Calu3 (cell line): ENCODE measurements at regions of chr6 and their contacts with region 1.

Region 1: GRCh38 chr6:137341681-137342195 is 122.6 kb upstream of the IFNGR1 start:
- DNase-seq: peak; percentile 52
- H3K4me3 Mint-ChIP-seq: peak overlapping the region; percentile 28
- H3K27ac Mint-ChIP-seq: no peak overlapping the region
- H3K4me1 Mint-ChIP-seq: no peaks in the 10 kb centered on the region
- H3K27me3 Mint-ChIP-seq: no peaks in the 10 kb centered on the region
- CTCF ChIP-seq: peak; percentile 32

Region 2: GRCh38 chr6:137389150-137389704 is 47.5 kb after region 1 on chr6:
- CTCF ChIA-PET with region 1: no interaction called
- intact Hi-C with region 1: no loop called
- DNase-seq: no peak
- H3K4me3 Mint-ChIP-seq: no peak overlapping the region
- H3K27ac Mint-ChIP-seq: no peak overlapping the region
- H3K4me1 Mint-ChIP-seq: no peaks in the 10 kb centered on the region
- H3K27me3 Mint-ChIP-seq: peaks cover 34% of the 10 kb centered on the region
- CTCF ChIP-seq: no peak

Region 3: DNA sequence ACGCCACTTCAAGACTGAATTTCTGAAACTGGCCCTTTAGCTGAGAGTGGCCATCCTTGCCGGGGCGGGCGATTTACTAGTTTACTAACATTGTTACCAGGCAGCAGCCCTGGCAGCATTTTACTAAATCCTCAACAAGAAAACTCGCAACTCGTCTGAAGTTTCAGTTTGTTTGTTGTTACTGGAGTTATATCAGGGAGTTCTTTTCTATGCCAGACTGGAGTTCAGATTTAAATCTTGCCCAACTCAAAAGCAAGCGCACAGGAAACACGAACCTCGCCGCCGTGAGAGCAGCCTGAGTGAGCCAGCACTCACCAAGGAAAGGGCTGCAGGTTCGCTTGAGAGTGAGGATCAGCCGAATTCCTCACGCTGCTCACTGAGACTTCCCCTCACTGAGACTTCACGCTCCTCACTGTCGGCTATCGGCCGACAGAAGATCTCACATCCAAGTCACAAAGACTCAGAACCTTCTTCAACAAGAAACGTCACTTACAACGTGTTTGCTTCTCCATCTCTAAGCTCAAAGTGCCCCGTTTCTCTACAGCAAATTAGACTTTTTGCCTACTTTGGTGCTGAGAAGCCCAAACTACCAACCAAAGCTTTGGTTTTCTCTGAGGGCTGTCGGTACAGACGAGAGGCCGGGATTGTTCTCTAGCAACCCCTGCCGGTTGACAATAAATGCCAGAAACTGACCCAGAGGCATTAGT is 73.5 kb after region 1 on chr6:
- CTCF ChIA-PET with region 1: no interaction called
- intact Hi-C with region 1: loop called (anchors 5 kb)
- DNase-seq: peak; percentile 61
- H3K4me3 Mint-ChIP-seq: peak overlapping the region; percentile 71
- H3K27ac Mint-ChIP-seq: peak overlapping the region; percentile 59
- H3K4me1 Mint-ChIP-seq: no peaks in the 10 kb centered on the region
- H3K27me3 Mint-ChIP-seq: peaks cover 50% of the 10 kb centered on the region
- CTCF ChIP-seq: peak; percentile 50

Region 4: DNA sequence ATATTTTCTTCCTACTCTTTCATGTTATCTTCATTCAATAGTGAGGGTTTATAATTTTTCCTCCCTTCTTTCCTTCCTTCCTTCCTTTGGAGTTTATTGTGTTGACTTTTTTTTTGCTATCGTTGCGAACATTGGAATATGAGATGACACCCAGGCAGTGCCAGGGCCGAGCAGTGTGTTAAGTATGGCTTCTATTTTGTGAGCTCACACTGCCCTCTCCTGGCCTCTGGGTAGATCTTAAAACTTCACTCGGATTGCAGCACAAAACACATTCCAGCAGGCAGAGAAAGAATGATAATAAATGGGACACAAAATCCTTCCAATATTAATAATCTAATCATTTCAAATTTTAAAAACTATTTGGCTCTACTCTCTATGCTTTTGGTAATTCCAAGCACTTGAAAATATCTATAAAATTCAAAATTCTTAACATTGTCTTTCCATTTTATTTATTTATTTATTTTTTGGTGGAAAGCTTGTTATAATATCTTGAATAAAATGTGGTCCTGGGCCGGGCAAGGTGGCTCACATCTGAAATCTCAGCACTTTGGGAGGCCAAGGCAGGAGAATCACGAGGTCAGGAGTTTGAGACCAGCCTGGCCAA is 299.8 kb after region 1 on chr6:
- CTCF ChIA-PET with region 1: interaction called, 3 read pairs
- intact Hi-C with region 1: loop called (anchors 1 kb)
- DNase-seq: peak; percentile 53
- H3K4me3 Mint-ChIP-seq: no peak overlapping the region
- H3K27ac Mint-ChIP-seq: no peak overlapping the region
- H3K4me1 Mint-ChIP-seq: peaks cover 5% of the 10 kb centered on the region
- H3K27me3 Mint-ChIP-seq: no peaks in the 10 kb centered on the region
- CTCF ChIP-seq: no peak